ENCODE measurements at regions of chr21 and their contacts with region 1.

Region 1: GRCh38 chr21:39612233-39613040 is at the start of gene B3GALT5:
- DNase-seq: peak; percentile 45
- ATAC-seq: peak; percentile 42
- H3K4me3 ChIP-seq: peak within 1 kb of the TSS; percentile 68
- H3K27ac ChIP-seq: no peak within 1 kb of the TSS
- H3K4me1 ChIP-seq: peaks cover 32% of the 10 kb centered on the region
- H3K27me3 ChIP-seq: 0 out of 2 replicates have a peak, but pooled peaks cover 3% of the 10 kb centered on the region
- CTCF ChIP-seq: no peak
- total RNA-seq, gene B3GALT5: 0.58 and 1.5 TPM in 2 replicates

Region 2: DNA sequence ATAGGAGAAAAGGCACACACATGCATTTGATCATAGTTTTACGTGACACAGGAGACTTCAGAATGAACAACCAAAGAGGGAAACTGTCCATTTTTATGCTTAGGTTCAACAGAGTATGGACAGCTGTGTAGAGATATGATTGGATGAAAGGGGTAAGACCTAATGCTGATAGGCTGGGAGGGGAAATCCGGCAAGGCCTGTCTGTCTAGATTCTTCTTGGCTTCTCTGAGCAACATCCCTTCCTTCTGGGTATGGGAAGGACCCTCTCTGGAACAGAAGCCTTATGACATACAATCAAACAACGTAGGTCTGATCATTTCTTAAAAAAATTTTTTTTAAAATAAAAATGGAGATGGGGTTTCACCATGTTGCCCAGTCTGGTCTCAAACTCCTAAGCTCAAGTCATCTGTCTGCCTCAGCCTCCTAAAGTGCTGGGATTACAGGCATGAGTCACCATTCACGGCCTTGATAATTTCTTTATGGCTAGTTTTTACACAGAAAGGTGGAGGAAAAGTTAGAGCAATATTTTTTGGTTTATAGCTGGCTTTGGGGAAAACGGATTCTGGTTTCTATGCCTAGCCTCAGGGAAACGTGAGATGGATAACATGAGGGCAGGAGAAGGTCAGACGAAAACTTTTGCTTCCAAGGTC is 69.8 kb before region 1 on chr21:
- CTCF ChIA-PET with region 1: no interaction called
- POLR2A ChIA-PET with region 1: no interaction called
- intact Hi-C with region 1: loop called (anchors 10 kb)
- DNase-seq: no peak
- ATAC-seq: no peak
- H3K4me3 ChIP-seq: no peak overlapping the region
- H3K27ac ChIP-seq: no peak overlapping the region
- H3K4me1 ChIP-seq: peaks cover 5% of the 10 kb centered on the region
- H3K27me3 ChIP-seq: peaks cover 4% of the 10 kb centered on the region; the same call in 1 of the 2 replicates
- CTCF ChIP-seq: no peak

Region 3: DNA sequence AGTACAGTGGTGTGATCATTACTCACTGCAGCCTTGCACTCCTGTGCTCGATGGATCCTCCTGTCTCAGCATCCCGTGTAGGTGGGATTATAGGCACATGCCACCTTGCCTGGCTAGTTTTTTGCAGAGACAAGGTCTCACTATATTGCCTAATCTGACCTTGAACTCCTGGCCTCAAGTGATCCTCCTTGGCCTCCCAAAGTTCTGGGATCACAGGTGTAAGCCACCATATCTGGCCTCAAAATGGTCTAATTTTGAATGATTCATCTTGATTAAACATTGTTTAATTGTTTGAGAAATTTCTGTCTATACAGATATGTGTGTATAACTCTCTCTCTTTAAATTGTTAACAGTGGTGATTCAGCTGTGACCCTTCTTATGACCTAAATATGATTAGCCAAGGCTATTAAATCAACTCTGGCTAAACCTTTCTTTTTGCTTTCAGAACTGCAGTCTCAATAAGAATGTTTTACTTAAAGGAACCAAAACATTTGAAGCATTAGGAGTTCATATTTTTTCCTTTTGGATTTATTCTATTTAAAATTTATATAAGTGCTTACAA is 19.0 kb before region 1 on chr21:
- CTCF ChIA-PET with region 1: no interaction called
- POLR2A ChIA-PET with region 1: no interaction called
- intact Hi-C with region 1: loop called (anchors 1 kb)
- DNase-seq: peak; percentile 60
- ATAC-seq: peak; percentile 88
- H3K4me3 ChIP-seq: no peak overlapping the region
- H3K27ac ChIP-seq: no peak overlapping the region
- H3K4me1 ChIP-seq: peaks cover 6% of the 10 kb centered on the region; the same call in 1 of the 2 replicates
- H3K27me3 ChIP-seq: no peaks in the 10 kb centered on the region
- CTCF ChIP-seq: no peak

Region 4: GRCh38 chr21:39705849-39706248 is 93.4 kb after region 1 on chr21:
- CTCF ChIA-PET with region 1: no interaction called
- POLR2A ChIA-PET with region 1: no interaction called
- intact Hi-C with region 1: loop called (anchors 1 kb)
- DNase-seq: peak; percentile 44
- ATAC-seq: peak; percentile 45
- H3K4me3 ChIP-seq: no peak overlapping the region
- H3K27ac ChIP-seq: no peak overlapping the region
- H3K4me1 ChIP-seq: no peaks in the 10 kb centered on the region
- H3K27me3 ChIP-seq: no peaks in the 10 kb centered on the region
- CTCF ChIP-seq: peak; percentile 60

Measured in PC-3 (cell line).